HCT116 (cell line): ENCODE measurements at regions of chr4 and their contacts with region 1.

Region 1: DNA sequence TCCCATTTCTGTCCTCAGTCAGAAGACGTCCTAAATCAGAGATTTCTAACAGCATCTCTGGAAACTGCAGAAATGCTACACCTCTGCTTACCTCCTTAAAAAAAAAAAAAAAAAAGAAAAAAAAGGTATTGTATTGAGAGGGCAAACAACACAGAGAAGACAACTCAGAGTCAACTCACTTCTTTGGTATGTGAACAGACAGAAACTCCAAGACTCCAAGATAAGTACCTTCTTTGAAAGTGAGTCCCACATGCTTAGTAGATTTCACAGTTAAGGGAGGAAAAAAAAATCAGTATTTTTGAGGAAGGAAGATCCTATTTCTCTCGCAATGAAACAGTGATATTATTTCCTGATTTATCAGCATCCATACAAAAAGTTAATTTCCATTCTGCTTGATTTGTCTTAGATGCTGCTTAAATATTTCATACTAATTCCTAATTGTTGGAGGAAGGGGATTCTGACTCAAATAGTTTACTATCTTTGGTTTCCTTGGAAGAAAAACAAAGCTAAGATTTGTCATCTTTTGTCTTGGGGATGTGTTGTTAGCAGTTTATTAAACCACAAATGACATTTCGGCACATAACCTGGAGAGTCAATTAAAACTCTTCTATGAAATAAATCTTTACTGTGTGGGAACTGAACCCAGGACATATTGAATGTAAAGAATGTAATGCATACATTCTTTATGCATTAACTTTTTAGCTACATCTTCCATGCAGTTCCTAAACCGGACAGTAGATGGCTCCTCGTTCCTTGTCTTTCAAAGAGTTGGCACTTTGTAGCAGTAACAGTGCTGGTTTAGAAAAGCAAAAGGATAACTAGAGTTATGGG is 4.7 kb downstream of the RASGEF1B start:
- DNase-seq: peak; percentile 45
- ATAC-seq: no peak
- H3K4me3 ChIP-seq: no peak overlapping the region
- H3K27ac ChIP-seq: no peak overlapping the region
- H3K4me1 ChIP-seq: peaks cover 0 to 13% of the 10 kb centered on the region in 2 experiments; a peak in 2 of 4 replicates
- H3K27me3 ChIP-seq: peaks cover 45% of the 10 kb centered on the region
- CTCF ChIP-seq: peak; percentile 74 to 95 (median 84)
- POLR2A ChIP-seq: no peak
- RAD21 ChIP-seq: peak; percentile 84

Region 2: DNA sequence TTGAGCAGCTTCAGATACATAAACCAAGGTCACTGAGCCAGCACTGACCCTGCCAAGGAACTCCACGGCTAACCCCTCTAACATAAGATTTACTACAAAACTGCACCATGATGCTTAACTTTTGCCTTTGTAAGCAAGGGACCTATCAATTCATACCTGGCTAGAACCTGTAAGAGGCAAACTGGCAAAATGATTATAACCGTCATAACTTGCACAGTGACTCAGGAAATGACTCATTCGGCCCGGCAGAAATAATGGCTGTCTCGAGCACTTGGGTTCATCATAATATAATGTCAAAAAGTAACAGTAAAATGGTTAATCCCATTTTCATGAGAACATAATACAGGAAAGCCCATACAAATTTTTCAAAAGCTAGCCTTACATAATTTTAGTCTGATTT is 12.6 kb before region 1 on chr4:
- CTCF ChIA-PET with region 1: interaction called, 10 read pairs
- POLR2A ChIA-PET with region 1: no interaction called
- RAD21 ChIA-PET with region 1: no interaction called
- intact Hi-C with region 1: no loop called
- DNase-seq: no peak
- ATAC-seq: peak; percentile 65; the same call in 1 of the 2 replicates
- H3K4me3 ChIP-seq: no peak overlapping the region
- H3K27ac ChIP-seq: no peak overlapping the region
- H3K4me1 ChIP-seq: peaks cover 2 to 12% of the 10 kb centered on the region in 2 experiments; a peak in 3 of 4 replicates
- H3K27me3 ChIP-seq: peaks cover 25% of the 10 kb centered on the region; the same call in 1 of the 2 replicates
- CTCF ChIP-seq: no peak
- POLR2A ChIP-seq: no peak
- RAD21 ChIP-seq: no peak

Region 3: DNA sequence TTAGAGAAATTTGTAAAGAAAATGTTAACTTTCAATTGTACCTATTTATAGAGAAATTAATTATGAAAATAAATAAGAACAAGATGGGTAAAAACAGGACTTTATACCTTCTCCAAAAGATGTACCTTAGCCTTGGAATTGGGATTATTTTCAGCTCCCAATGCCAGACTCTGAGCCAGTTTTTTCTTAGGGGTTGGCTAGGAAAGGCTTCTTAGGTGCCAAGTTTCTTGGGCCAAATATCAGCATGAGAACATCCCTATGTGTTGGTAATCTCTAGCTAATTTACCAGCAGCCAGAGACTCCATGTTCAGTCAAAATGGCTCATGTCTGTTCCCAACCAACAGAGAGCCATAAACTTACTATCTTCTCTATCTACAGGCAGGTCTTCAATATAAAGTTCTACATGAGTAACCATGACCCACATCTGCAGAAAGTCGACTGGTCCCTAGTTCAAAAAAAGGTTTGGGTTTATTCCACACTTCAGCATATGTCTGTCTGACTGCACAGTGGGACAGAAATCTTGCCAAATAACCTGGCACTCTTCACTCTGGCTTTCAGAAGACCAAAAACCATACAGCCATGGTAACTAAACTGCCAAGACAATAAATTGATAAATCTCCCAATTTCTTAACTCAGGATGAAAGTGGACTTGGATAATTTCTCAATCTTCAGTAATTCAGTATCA is 385.1 kb after region 1 on chr4:
- CTCF ChIA-PET with region 1: no interaction called
- POLR2A ChIA-PET with region 1: no interaction called
- RAD21 ChIA-PET with region 1: interaction called in 1 of 2 experiments, 13 read pairs
- intact Hi-C with region 1: no loop called
- DNase-seq: no peak
- ATAC-seq: no peak
- H3K4me3 ChIP-seq: no peak overlapping the region
- H3K27ac ChIP-seq: no peak overlapping the region
- H3K4me1 ChIP-seq: no peaks in the 10 kb centered on the region
- H3K27me3 ChIP-seq: 0 out of 2 replicates have a peak, but pooled peaks cover 4% of the 10 kb centered on the region
- CTCF ChIP-seq: no peak
- POLR2A ChIP-seq: no peak
- RAD21 ChIP-seq: no peak

Region 4: DNA sequence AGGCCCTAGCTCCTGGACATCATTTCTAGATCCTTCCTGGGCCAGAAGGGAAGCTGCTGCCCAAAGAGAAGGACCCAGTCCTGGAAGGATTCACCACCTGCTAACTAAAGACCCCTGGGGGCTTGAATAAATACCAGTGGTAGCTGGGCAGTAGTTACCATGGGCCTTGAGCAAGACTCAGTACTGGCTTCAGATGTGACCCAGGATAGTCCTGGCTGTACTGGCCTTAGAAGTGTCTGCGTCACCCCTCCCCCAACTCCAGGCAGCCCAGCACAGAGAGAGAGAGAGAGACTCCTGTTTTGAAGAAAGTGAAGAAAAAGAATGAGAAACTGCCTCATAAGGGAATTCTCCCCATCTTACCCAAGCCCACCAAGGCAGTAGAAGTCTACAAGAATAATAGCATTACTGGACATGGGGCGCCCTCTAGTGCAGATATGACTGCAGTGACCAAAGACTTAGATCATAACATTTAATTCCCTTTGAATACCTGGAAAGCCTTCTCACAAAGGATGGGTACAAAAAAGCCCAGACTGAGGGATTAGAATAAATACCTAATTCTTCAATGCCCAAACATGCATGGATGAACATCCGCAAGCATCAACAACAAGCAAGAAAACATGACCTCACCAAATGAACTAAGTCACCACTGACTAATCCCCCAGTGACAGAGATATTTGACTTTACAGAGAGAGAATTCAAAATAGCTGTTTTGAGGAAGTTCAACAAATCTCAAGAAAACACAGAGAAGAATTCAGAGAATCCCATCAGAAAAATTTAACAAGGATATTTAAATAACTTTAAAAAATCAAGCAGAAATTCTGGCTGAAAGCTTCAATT is 735.0 kb after region 1 on chr4:
- CTCF ChIA-PET with region 1: interaction called, 12 read pairs
- POLR2A ChIA-PET with region 1: no interaction called
- RAD21 ChIA-PET with region 1: interaction called in 1 of 2 experiments, 4 read pairs
- intact Hi-C with region 1: loop called (anchors 1 kb)
- DNase-seq: peak; percentile 36
- ATAC-seq: peak; percentile 84
- H3K4me3 ChIP-seq: no peak overlapping the region
- H3K27ac ChIP-seq: no peak overlapping the region
- H3K4me1 ChIP-seq: no peaks in the 10 kb centered on the region
- H3K27me3 ChIP-seq: no peaks in the 10 kb centered on the region
- CTCF ChIP-seq: peak; percentile 69 to 91 (median 72)
- POLR2A ChIP-seq: no peak
- RAD21 ChIP-seq: peak; percentile 86

Region 5: DNA sequence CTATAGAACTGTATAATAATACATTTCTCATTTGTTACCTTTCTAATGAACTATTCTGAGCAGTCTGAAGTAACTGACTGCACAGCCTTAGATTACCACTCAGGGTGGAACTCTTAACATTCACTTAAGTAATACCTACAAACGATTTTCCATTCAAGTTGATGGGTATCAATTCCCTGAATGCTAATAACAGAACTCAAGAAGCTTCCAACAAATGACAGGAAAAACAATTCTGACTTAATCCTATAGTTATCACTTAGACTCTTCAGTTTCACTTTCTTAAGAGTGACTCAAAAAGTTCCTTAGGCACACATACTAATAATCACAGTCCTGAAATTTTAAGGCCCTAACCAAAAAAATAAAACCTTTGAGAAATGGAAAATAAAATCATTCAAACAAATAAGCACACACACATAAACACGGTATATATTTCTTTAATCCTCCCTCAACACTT is 885.9 kb after region 1 on chr4:
- CTCF ChIA-PET with region 1: no interaction called
- POLR2A ChIA-PET with region 1: no interaction called
- RAD21 ChIA-PET with region 1: no interaction called
- intact Hi-C with region 1: loop called (anchors 10 kb)
- DNase-seq: no peak
- ATAC-seq: no peak
- H3K4me3 ChIP-seq: no peak overlapping the region
- H3K27ac ChIP-seq: no peak overlapping the region
- H3K4me1 ChIP-seq: peaks cover 0 to 7% of the 10 kb centered on the region in 2 experiments; a peak in 1 of 4 replicates
- H3K27me3 ChIP-seq: no peaks in the 10 kb centered on the region
- CTCF ChIP-seq: no peak
- POLR2A ChIP-seq: no peak
- RAD21 ChIP-seq: no peak